Posterior cingulate gyrus (tissue), 11 donors: ENCODE measurements at regions of chr2 and their contacts with region 1.

Region 1: DNA sequence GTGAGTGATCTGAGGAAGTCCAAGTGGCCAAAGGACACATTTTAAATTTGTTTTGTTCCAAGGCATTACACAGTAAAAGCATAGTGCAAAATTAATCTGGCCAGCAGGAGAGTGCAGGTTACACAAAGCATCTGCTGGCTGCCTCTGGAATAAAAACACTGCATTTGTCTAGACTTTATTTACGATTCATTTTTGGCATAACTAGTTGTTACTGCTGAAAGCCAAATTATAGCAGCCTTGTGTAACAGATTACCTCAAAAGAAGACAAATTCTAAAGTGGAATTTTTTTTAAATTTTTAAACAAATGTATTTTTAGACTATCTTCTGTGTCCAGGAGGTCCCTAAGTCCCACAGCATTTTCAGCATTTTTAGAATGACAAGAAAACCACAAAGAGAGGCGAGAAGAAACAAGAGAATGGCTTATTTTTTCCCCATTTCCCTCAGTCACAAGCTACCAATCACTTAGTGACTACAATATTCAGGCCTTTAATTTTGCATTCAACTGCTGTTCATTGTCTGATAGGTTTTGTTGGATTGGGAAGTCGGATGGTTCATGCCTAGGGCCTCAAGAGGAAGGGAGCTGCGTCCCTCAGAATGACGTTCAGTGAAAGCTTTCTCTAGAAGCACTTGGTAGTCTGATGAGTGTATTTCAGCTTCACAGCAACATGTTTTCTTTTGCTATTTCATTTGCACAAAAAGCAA is 46.0 kb downstream of the TMEFF2 start:
- DNase-seq: peak in 1 of 10 donors; percentile 10

Region 2: DNA sequence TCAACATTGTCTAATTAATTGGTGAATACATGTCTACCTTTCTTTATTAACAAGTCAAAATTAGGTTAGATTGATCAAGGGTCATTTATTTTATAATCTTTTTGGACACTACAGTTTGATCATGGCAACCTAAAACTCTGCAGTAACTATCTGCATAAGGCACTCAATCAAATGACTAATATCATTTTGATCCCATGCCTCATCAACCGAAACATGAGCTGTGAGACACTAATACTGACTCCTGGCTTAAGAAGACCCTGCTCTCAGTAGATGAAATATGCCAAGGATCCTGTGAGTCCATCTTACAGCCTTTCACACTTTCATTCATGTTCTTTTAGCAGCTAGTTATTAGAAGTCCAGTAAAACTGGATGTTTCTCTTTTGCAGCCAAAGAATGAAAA is 132.5 kb before region 1 on chr2:
- intact Hi-C with region 1: loop called (anchors 10 kb)
- DNase-seq: no peak

Region 3: GRCh38 chr2:192026815-192027120 is 122.0 kb before region 1 on chr2:
- intact Hi-C with region 1: no loop called
- DNase-seq: no peak

Region 4: DNA sequence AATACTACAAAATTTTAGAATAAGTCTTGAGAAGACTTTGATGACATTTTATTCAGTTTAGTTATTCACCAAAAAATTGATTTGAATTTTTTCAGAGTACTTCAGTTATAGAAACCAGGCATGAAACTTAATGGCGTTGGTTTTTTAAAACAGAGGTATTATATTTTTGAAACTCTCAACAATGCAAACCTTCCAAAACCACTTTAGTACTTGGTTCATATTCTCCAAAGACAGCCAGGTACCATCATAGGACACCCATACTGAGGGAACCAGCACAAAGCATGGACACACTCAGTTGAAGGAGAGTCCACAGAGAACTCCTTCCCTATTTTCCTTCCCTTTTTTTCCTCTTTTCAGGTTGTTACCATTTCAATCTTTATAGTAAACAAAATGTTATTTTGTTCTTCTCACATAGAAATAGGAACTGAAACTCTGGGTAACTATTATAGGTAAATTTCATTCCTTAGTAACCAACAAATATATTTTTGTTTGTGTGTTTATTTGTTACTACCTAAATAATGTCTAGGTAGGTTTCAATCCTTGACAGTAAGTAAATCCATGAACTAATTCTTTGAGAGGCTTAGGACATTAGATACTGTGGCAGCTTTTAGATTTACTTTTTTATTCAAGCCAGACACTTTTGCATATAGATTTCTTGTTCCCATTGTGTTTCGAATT is 49.8 kb before region 1 on chr2:
- intact Hi-C with region 1: loop called (anchors 2 kb)
- DNase-seq: no peak